ENCODE measurements at regions of chr12 and their contacts with region 1.

Region 1: DNA sequence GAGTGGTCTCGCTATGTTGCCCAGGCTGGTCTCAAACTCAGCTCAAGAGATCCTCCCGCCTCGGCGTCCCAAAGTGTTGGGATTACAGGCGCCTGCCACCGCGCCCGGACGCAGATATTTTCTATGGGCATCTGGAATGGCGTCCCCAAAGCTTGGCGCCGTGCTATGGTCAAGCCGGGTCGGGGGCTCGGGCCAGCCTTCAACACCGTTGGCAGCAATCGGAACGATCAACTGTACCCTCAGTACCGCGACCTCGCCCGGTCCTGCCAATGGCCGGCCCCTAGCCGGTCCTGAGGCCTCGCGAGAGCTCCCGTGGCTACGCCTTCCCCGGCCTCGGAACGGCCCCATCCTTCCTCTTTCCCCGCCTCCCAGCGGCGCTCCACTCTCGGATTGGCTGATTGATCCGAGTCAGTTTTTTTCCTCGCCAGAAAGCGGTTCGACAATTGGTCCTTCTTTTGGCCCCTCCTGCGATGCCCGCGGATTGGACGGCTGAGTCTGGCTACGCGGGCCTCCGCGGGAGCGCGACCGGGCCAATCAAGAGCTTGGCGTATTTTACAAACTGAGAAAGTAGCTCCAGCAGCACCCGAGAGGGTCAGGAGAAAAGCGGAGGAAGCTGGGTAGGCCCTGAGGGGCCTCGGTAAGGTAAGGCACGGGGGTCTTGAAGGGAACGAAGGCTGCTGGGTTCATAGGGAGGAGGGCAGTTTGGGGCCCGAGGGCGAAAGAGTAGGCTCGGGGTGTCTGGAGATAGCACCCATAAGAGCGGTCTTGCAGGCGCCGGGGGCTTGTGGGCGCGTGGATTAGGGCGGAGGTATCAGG is at the start of gene TROAP:
- DNase-seq: peak; percentile 99 to 100
- H3K4me3 ChIP-seq: peak within 1 kb of the TSS; percentile 89
- H3K4me3 Mint-ChIP-seq: peak within 1 kb of the TSS; percentile 99
- H3K27ac Mint-ChIP-seq: peak within 1 kb of the TSS; percentile 98
- H3K4me1 ChIP-seq: peaks cover 10% of the 10 kb centered on the region; the same call in 1 of the 2 replicates
- H3K4me1 Mint-ChIP-seq: peaks cover 6% of the 10 kb centered on the region
- H3K27me3 ChIP-seq: no peaks in the 10 kb centered on the region
- H3K27me3 Mint-ChIP-seq: no peaks in the 10 kb centered on the region
- CTCF ChIP-seq: no peak
- total RNA-seq, gene TROAP: 134 and 135 TPM in 2 replicates

Region 2: DNA sequence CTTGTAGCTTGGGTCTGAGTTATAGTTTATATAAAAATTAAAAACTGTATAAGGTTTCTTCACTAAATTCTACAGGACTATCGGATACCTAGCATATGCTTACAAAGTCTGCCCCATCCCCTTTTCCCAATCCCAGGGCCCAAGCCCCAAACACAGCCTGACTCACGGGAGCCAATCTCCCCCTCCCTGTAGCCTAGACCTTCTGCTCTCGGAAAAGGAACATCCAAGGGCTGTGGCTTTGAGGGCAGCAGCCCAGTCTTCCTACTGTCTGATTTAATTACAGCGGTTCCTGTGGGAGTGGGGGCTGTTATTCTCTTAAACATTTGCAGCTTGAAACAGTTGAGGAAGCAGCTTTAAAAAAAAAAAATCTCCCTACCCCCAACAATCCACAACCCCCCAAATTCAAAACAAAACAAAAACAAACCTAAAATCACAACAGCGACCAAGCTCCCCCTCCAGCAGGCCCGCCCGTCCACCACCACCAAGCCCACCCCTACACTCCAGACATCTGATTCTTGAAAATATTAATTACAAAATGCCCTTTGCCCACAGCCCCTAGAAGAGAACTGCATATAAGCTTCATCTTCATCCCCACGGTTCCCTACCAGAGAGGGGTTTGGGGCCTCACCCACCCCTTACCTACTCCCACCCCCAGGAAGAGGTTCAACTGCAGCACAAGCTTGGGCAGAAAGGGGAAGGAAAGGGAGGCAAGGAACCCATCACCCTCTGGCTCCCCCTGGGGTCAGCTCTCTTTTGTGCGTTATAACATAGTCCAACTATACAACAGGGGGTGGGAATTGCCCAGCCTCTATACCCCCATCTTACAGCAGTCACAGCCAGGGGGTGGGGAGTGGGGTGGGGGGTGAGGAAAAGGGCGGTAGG is 303.2 kb before region 1 on chr12:
- CTCF ChIA-PET with region 1: no interaction called
- POLR2A ChIA-PET with region 1: no interaction called
- intact Hi-C with region 1: no loop called
- DNase-seq: peak; percentile 67 to 69
- H3K4me3 ChIP-seq: peak overlapping the region; percentile 73
- H3K4me3 Mint-ChIP-seq: peak overlapping the region; percentile 91
- H3K27ac Mint-ChIP-seq: peak overlapping the region; percentile 98
- H3K4me1 ChIP-seq: 0 out of 2 replicates have a peak, but pooled peaks cover 4% of the 10 kb centered on the region
- H3K4me1 Mint-ChIP-seq: peaks cover 19% of the 10 kb centered on the region
- H3K27me3 ChIP-seq: no peaks in the 10 kb centered on the region
- H3K27me3 Mint-ChIP-seq: no peaks in the 10 kb centered on the region
- CTCF ChIP-seq: peak; percentile 36 to 69

Region 3: GRCh38 chr12:49288412-49288853 is 34.5 kb before region 1 on chr12:
- CTCF ChIA-PET with region 1: interaction called, 9 read pairs
- POLR2A ChIA-PET with region 1: interaction called, 3 read pairs
- intact Hi-C with region 1: loop called (anchors 2 kb)
- DNase-seq: peak in 1 of 2 experiments; percentile 75
- H3K4me3 ChIP-seq: no peak overlapping the region
- H3K4me3 Mint-ChIP-seq: no peak overlapping the region
- H3K27ac Mint-ChIP-seq: no peak overlapping the region
- H3K4me1 ChIP-seq: peaks cover 3% of the 10 kb centered on the region; the same call in 1 of the 2 replicates
- H3K4me1 Mint-ChIP-seq: peaks cover 6% of the 10 kb centered on the region
- H3K27me3 ChIP-seq: no peaks in the 10 kb centered on the region
- H3K27me3 Mint-ChIP-seq: peaks cover 3% of the 10 kb centered on the region
- CTCF ChIP-seq: peak; percentile 77 to 96

Region 4: GRCh38 chr12:49336645-49337584 is 14.0 kb after region 1 on chr12 and contains the start of gene C1QL4:
- CTCF ChIA-PET with region 1: interaction called, 72 read pairs
- POLR2A ChIA-PET with region 1: interaction called, 26 read pairs
- intact Hi-C with region 1: no loop called
- DNase-seq: peak; percentile 87 to 97
- H3K4me3 ChIP-seq: peak within 1 kb of the TSS; percentile 49
- H3K4me3 Mint-ChIP-seq: peak within 1 kb of the TSS; percentile 73
- H3K27ac Mint-ChIP-seq: no peak within 1 kb of the TSS
- H3K4me1 ChIP-seq: peaks cover 13% of the 10 kb centered on the region
- H3K4me1 Mint-ChIP-seq: peaks cover 20% of the 10 kb centered on the region
- H3K27me3 ChIP-seq: no peaks in the 10 kb centered on the region
- H3K27me3 Mint-ChIP-seq: no peaks in the 10 kb centered on the region
- CTCF ChIP-seq: peak; percentile 98 to 99
- total RNA-seq, gene C1QL4: 2.6 and 3.6 TPM in 2 replicates

Region 5: GRCh38 chr12:49342066-49342913 is 19.4 kb after region 1 on chr12:
- CTCF ChIA-PET with region 1: interaction called, 68 read pairs
- POLR2A ChIA-PET with region 1: interaction called, 13 read pairs
- intact Hi-C with region 1: no loop called
- DNase-seq: peak; percentile 61 to 74
- H3K4me3 ChIP-seq: no peak overlapping the region
- H3K4me3 Mint-ChIP-seq: no peak overlapping the region
- H3K27ac Mint-ChIP-seq: no peak overlapping the region
- H3K4me1 ChIP-seq: peaks cover 4% of the 10 kb centered on the region
- H3K4me1 Mint-ChIP-seq: peaks cover 8% of the 10 kb centered on the region
- H3K27me3 ChIP-seq: no peaks in the 10 kb centered on the region
- H3K27me3 Mint-ChIP-seq: no peaks in the 10 kb centered on the region
- CTCF ChIP-seq: peak; percentile 47 to 67

Region 6: GRCh38 chr12:49538510-49539403 is 215.8 kb after region 1 on chr12 and contains the start of gene KCNH3:
- CTCF ChIA-PET with region 1: no interaction called
- POLR2A ChIA-PET with region 1: no interaction called
- intact Hi-C with region 1: no loop called
- DNase-seq: peak; percentile 86
- H3K4me3 ChIP-seq: peak within 1 kb of the TSS; percentile 56
- H3K4me3 Mint-ChIP-seq: peak within 1 kb of the TSS; percentile 77
- H3K27ac Mint-ChIP-seq: no peak within 1 kb of the TSS
- H3K4me1 ChIP-seq: peaks cover 10% of the 10 kb centered on the region
- H3K4me1 Mint-ChIP-seq: no peaks in the 10 kb centered on the region
- H3K27me3 ChIP-seq: peaks cover 4% of the 10 kb centered on the region; the same call in 1 of the 2 replicates
- H3K27me3 Mint-ChIP-seq: peaks cover 10% of the 10 kb centered on the region
- CTCF ChIP-seq: no peak
- total RNA-seq, gene KCNH3: 0.16 and 0.27 TPM in 2 replicates

Region 7: GRCh38 chr12:49990273-49990672 is 667.4 kb after region 1 on chr12:
- CTCF ChIA-PET with region 1: no interaction called
- POLR2A ChIA-PET with region 1: interaction called, 19 read pairs
- intact Hi-C with region 1: no loop called
- DNase-seq: no peak
- H3K4me3 ChIP-seq: no peak overlapping the region
- H3K4me3 Mint-ChIP-seq: no peak overlapping the region
- H3K27ac Mint-ChIP-seq: no peak overlapping the region
- H3K4me1 ChIP-seq: no peaks in the 10 kb centered on the region
- H3K4me1 Mint-ChIP-seq: no peaks in the 10 kb centered on the region
- H3K27me3 ChIP-seq: no peaks in the 10 kb centered on the region
- H3K27me3 Mint-ChIP-seq: no peaks in the 10 kb centered on the region
- CTCF ChIP-seq: no peak

Measured in Caco-2 (cell line).